ENCODE measurements at regions of chr10 and their contacts with region 1.

Region 1: GRCh38 chr10:63083904-63084689 is 49.0 kb upstream of the NRBF2 start:
- DNase-seq: peak; percentile 14 to 61
- ATAC-seq: peak; percentile 69 to 91 (median 88)
- H3K4me3 ChIP-seq: no peak overlapping the region
- H3K27ac ChIP-seq: peak overlapping the region in 2 of 10 donors; percentile 3 to 39
- H3K4me1 ChIP-seq: peaks cover 0 to 10% (median 0%) of the 10 kb centered on the region in 9 donors
- H3K27me3 ChIP-seq: peaks cover 0 to 5% (median 0%) of the 10 kb centered on the region in 7 donors
- CTCF ChIP-seq: peak; percentile 27 to 81 (median 70)

Region 2: GRCh38 chr10:62437696-62438095 is 646.4 kb before region 1 on chr10:
- intact Hi-C with region 1: loop called in 7 of 10 experiments (anchors 2 to 10 kb)
- DNase-seq: peak in 1 of 2 donors; percentile 29
- ATAC-seq: peak in 4 of 8 donors; percentile 56 to 69 (median 63)
- H3K4me3 ChIP-seq: no peak overlapping the region
- H3K27ac ChIP-seq: no peak overlapping the region
- H3K4me1 ChIP-seq: peaks cover 0 to 11% (median 0%) of the 10 kb centered on the region in 9 donors
- H3K27me3 ChIP-seq: peaks cover 0 to 7% (median 0%) of the 10 kb centered on the region in 7 donors
- CTCF ChIP-seq: peak; percentile 52 to 88 (median 74)

Region 3: DNA sequence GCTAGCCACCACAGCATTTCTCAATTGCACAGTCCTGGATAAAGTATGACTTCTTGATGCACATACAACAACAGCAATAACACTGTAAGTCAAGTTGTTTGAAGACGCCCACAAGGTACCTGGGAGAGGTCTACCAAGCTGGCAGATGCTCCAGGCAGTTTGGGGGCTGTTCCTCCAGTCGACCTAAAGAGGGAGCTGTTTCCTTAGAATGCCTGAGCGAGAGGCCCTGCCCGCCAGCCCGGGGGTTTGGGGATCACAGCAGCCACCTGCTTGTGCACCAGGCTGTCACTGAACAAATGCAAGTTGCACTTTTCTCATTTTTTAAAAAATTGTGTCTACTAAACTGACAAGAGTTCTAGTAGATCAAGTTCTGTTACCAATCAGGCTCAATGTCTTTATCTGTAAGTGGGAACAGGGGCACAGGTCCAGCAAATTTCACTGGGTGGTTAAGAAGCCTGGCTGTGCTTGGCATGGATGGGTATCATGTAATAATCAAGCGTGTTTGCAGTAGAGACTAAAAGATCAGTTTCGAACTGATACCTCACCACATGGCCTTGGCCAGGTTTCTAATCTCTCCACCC is 473.4 kb before region 1 on chr10:
- intact Hi-C with region 1: loop called in 1 of 10 experiments (anchors 5 kb)
- DNase-seq: peak; percentile 28 to 41
- ATAC-seq: peak; percentile 55 to 78 (median 68)
- H3K4me3 ChIP-seq: no peak overlapping the region
- H3K27ac ChIP-seq: no peak overlapping the region
- H3K4me1 ChIP-seq: peaks cover 0 to 20% (median 0%) of the 10 kb centered on the region in 9 donors
- H3K27me3 ChIP-seq: peaks cover 0 to 9% (median 0%) of the 10 kb centered on the region in 7 donors
- CTCF ChIP-seq: peak; percentile 53 to 89 (median 84)

Region 4: DNA sequence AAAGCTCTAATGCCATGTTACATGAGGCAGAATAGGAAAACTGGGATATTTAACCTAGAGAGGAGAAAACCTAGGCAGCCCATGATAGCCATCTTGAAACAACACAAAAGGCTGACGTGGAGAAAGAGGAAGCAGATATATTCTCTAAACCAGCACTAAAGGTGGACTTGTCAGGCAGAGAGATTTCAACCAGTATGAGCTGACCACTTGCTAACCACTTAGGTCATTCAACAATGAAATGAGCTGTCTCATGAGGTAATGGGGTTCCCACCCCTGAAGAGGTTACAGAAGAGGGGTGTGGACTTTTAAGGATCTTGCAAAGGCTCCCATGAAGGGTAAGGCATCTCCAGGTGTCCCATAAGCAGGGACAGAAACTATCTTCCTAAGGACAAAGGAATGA is 241.1 kb before region 1 on chr10:
- intact Hi-C with region 1: loop called in 1 of 10 experiments (anchors 10 kb)
- DNase-seq: no peak
- ATAC-seq: no peak
- H3K4me3 ChIP-seq: no peak overlapping the region
- H3K27ac ChIP-seq: no peak overlapping the region
- H3K4me1 ChIP-seq: no peaks in the 10 kb centered on the region
- H3K27me3 ChIP-seq: no peaks in the 10 kb centered on the region
- CTCF ChIP-seq: no peak

Region 5: GRCh38 chr10:63197344-63198106 is 113.4 kb after region 1 on chr10:
- intact Hi-C with region 1: no loop called
- DNase-seq: no peak
- ATAC-seq: peak in 5 of 8 donors; percentile 37 to 76 (median 58)
- H3K4me3 ChIP-seq: no peak overlapping the region
- H3K27ac ChIP-seq: peak overlapping the region in 3 of 10 donors; percentile 5 to 27 (median 25)
- H3K4me1 ChIP-seq: peaks cover 0 to 24% (median 16%) of the 10 kb centered on the region in 9 donors
- H3K27me3 ChIP-seq: no peaks in the 10 kb centered on the region
- CTCF ChIP-seq: no peak

Measured in heart right ventricle (tissue), 16 donors.